Posterior vena cava (tissue), 2 donors: ENCODE measurements at regions of chr10 and their contacts with region 1.

Region 1: DNA sequence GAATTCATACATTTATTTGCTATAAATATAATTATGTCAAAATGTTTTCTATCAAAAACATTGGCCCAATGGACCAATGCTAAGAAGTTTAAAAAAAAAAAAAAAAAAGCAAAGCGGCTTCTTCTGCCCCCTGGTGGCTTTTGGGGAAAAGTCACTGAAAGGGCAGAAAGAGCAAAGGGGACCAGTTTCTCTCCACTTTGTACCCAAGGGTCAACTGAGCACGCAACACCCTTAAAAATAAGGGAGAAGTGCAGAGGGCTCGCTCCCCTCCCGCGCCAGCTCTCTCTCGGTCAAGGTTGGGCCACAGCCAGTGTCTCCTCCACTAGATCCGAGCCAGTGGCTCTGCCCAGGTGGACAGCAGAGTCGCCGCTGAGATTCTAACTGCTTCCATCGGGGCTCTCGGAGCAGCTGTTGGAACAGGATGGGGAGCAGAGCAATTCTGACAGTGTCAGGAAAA is 136.4 kb upstream of the FGFR2 start:
- DNase-seq: no peak

Region 2: GRCh38 chr10:120942806-120943413 is 791.7 kb before region 1 on chr10:
- intact Hi-C with region 1: loop called (anchors 5 kb)
- DNase-seq: peak; percentile 94

Region 3: GRCh38 chr10:120948889-120949608 is 785.6 kb before region 1 on chr10:
- intact Hi-C with region 1: loop called (anchors 5 kb)
- DNase-seq: peak; percentile 91

Region 4: DNA sequence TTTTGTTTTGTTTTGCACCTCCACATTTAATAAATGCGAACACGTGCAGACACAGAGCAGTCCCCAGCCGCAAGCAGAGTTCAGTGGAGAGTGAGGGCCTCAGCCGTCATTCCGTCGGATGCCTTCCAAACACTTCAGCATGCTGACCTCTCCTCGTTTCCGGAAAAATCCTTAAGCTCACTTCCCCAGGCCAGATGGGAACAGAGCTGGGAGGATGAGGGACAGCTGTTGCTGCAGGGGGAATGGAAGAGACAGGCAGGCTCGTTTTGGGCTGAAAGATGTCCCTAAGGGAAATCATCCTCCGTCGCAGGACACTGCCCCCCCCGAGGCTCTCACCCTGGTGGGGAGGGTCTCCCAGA is 119.2 kb before region 1 on chr10:
- intact Hi-C with region 1: loop called in 1 of 2 experiments (anchors 10 kb)
- DNase-seq: no peak

Region 5: GRCh38 chr10:121753726-121754476 is 19.3 kb after region 1 on chr10:
- intact Hi-C with region 1: no loop called
- DNase-seq: no peak